T-cell (primary cell): ENCODE measurements at regions of chr4 and their contacts with region 1.

Region 1: DNA sequence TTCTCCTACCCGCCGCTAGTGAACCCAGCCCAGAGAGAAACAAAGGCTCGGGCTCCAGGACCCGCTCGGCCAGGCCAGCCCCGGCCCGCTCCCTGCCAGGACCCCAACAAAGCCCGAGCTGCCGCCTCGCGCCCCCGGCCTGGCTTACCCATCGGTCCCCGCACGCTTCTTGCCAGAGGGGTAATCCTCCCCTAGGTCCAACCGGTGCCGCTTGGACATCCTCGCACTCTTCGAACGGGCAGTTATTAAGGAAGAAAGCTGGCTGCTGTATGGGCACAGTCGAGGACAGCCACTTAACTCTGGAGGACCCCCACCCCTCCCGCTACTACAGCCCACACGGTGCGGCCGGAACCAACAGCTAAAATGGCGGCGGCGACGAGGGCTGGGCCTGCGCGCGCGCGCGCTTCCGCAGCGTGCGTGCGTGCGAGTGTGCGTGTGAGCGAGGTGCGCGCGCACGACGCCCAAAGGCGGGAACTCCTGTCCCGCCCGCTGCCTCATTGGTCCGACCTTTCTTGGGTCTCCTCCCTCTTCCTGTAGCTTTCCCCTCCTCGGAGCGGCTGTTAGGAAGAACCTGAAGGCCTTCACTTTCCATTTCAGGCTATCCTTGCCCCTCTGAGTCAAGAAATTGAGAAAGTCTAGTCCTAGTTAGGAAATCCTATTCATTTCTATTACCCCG is at the start of gene DHX15:
- DNase-seq: peak; percentile 83 to 98 (median 90)
- ATAC-seq: peak; percentile 94 to 97 (median 96)
- H3K4me3 ChIP-seq: peak within 1 kb of the TSS; percentile 95 to 96
- H3K4me3 Mint-ChIP-seq: peak within 1 kb of the TSS; percentile 97 to 99 (median 99)
- H3K27ac ChIP-seq: peak within 1 kb of the TSS; percentile 94
- H3K27ac Mint-ChIP-seq: peak within 1 kb of the TSS; percentile 96 to 97
- H3K4me1 ChIP-seq: peaks cover 24 to 26% of the 10 kb centered on the region in 2 experiments
- H3K4me1 Mint-ChIP-seq: peaks cover 40 to 47% (median 46%) of the 10 kb centered on the region in 3 donors
- H3K27me3 ChIP-seq: no peaks in the 10 kb centered on the region
- H3K27me3 Mint-ChIP-seq: peaks cover 0 to 3% of the 10 kb centered on the region in 2 donors
- total RNA-seq, gene DHX15: 116 to 174 (median 121) TPM

Region 2: GRCh38 chr4:24514803-24515202 is 69.5 kb before region 1 on chr4:
- CTCF ChIA-PET with region 1: no interaction called
- POLR2A ChIA-PET with region 1: no interaction called
- DNase-seq: no peak
- ATAC-seq: no peak
- H3K4me3 ChIP-seq: no peak overlapping the region
- H3K4me3 Mint-ChIP-seq: no peak overlapping the region
- H3K27ac ChIP-seq: no peak overlapping the region
- H3K27ac Mint-ChIP-seq: no peak overlapping the region
- H3K4me1 ChIP-seq: no peaks in the 10 kb centered on the region
- H3K4me1 Mint-ChIP-seq: no peaks in the 10 kb centered on the region
- H3K27me3 ChIP-seq: no peaks in the 10 kb centered on the region
- H3K27me3 Mint-ChIP-seq: no peaks in the 10 kb centered on the region

Region 3: DNA sequence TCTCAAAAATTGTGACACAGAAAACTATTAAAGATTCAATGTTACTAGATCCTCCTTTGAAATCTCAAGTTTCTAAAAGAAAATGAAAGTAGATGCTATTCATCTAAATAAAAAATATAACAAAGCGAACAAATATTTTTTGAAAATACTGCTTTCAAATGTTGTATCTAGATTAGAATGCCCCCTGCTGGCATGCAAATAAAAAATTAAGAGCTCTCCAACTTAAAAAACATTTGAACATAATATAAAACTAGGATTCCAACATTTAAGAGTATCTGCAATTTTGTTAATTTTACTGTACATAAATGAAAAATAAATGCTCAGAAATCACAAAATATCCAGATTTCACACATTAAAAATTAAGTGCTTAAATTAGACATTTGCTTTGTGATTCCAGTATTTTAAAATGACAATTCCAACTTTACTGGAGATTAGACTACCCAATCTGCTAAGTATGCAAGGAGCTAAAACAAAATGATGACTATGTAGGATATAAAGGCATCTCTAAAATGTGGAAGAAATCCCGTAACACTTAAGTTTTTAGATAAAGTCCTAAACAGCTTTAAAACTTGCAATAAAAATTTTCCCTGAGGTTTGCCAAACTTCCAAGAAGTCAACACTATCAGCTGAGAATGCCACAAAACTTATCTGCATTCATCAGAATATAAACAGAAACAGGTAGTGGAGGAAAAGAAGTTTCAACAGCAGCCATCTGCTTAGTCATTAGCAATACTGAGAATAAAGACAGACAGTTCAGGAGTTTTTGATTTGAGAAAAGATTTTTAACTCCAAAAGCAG is 32.6 kb before region 1 on chr4:
- CTCF ChIA-PET with region 1: interaction called in 1 of 2 experiments, 10 read pairs
- POLR2A ChIA-PET with region 1: no interaction called
- DNase-seq: peak in 1 of 35 experiments; percentile 15
- ATAC-seq: no peak
- H3K4me3 ChIP-seq: no peak overlapping the region
- H3K4me3 Mint-ChIP-seq: no peak overlapping the region
- H3K27ac ChIP-seq: no peak overlapping the region
- H3K27ac Mint-ChIP-seq: no peak overlapping the region
- H3K4me1 ChIP-seq: peaks cover 2 to 6% of the 10 kb centered on the region in 2 experiments
- H3K4me1 Mint-ChIP-seq: peaks cover 41 to 57% (median 47%) of the 10 kb centered on the region in 3 donors
- H3K27me3 ChIP-seq: no peaks in the 10 kb centered on the region
- H3K27me3 Mint-ChIP-seq: no peaks in the 10 kb centered on the region

Region 4: DNA sequence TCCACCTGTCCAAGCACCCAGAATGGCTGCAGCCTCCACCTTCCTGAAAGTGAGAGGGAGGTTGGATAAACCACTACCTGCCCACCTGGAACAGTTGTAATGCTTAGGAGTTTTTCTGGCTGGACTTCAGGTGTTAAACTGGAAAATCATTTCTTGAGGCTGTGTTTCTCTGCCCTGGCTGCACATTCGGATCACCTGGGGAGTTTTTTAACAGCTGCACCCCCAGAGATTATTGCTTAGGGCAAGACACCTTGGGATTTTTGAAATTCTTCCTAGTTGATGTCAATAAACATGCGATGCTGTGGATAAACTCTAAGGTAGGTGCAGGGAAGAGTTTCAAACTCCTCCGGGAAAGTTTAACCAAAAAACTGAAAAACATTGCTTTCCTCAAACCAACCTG is 618.1 kb after region 1 on chr4:
- CTCF ChIA-PET with region 1: no interaction called
- POLR2A ChIA-PET with region 1: interaction called in 1 of 2 experiments, 10 read pairs
- DNase-seq: no peak
- ATAC-seq: no peak
- H3K4me3 ChIP-seq: no peak overlapping the region
- H3K4me3 Mint-ChIP-seq: no peak overlapping the region
- H3K27ac ChIP-seq: no peak overlapping the region
- H3K27ac Mint-ChIP-seq: no peak overlapping the region
- H3K4me1 ChIP-seq: no peaks in the 10 kb centered on the region
- H3K4me1 Mint-ChIP-seq: no peaks in the 10 kb centered on the region
- H3K27me3 ChIP-seq: no peaks in the 10 kb centered on the region
- H3K27me3 Mint-ChIP-seq: no peaks in the 10 kb centered on the region

Region 5: GRCh38 chr4:25234390-25235370 is 650.4 kb after region 1 on chr4:
- CTCF ChIA-PET with region 1: no interaction called
- POLR2A ChIA-PET with region 1: interaction called in 1 of 2 experiments, 11 read pairs
- DNase-seq: peak in 31 of 35 experiments; percentile 6 to 81 (median 21)
- ATAC-seq: peak; percentile 39 to 49 (median 42)
- H3K4me3 ChIP-seq: peak overlapping the region; percentile 91 to 93
- H3K4me3 Mint-ChIP-seq: peak overlapping the region; percentile 85 to 95 (median 90)
- H3K27ac ChIP-seq: peak overlapping the region; percentile 88
- H3K27ac Mint-ChIP-seq: peak overlapping the region; percentile 94 to 98
- H3K4me1 ChIP-seq: peaks cover 11 to 26% of the 10 kb centered on the region in 2 experiments
- H3K4me1 Mint-ChIP-seq: peaks cover 44 to 52% (median 46%) of the 10 kb centered on the region in 3 donors
- H3K27me3 ChIP-seq: no peaks in the 10 kb centered on the region
- H3K27me3 Mint-ChIP-seq: no peaks in the 10 kb centered on the region